Thyroid gland (tissue), 4 donors: ENCODE measurements at regions of chr6 and their contacts with region 1.

Region 1: GRCh38 chr6:13908955-13909381 is 15.8 kb upstream of the RNF182 start:
- DNase-seq: peak; percentile 31 to 53
- H3K4me3 ChIP-seq: no peak overlapping the region
- H3K27ac ChIP-seq: no peak overlapping the region
- H3K4me1 ChIP-seq: no peaks in the 10 kb centered on the region
- H3K27me3 ChIP-seq: no peaks in the 10 kb centered on the region
- CTCF ChIP-seq: peak; percentile 59 to 91 (median 84)
- POLR2A ChIP-seq: no peak

Region 2: DNA sequence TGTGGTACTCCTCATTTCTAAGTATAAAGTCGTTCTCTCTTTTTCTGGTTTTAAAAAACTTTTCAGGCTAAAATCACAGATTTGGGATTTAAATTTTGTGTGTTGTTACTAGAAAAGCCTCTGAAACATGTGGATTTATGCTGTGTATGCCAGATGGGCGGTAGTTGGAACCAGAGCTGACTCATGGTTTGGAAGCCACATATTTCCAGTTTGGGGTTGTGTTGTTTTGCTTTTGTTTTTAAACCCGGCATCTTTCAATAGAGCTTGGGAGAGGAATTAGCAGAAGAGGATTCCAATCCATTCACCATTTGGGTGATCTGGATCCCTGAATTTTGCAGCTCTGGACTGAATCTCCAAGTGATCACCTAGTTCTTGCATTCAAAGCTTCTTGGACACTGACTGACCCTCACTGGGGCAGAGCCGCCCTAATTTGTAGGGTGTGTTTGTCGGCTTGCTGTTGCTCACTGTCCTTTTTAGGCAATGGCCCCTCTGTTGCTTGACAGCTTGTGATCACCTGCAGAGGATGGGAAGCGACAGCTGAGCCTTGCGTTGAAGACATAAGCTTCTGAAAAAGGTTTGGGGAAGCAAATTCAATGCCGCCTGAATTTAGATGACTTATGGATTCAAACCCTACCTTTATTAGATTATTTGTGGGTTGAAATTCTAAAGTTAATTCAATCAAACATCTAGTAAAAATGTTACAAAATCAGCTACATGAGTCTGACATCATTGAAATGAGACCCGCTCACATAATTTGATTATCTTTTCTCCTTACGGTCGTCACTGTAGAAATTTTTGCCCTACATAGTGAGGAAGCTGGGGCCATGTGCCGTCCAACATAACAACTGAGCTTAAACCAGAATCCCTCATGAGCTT is 128.7 kb after region 1 on chr6:
- intact Hi-C with region 1: no loop called
- DNase-seq: no peak
- H3K4me3 ChIP-seq: no peak overlapping the region
- H3K27ac ChIP-seq: no peak overlapping the region
- H3K4me1 ChIP-seq: peaks cover 0 to 13% of the 10 kb centered on the region in 2 donors
- H3K27me3 ChIP-seq: no peaks in the 10 kb centered on the region
- CTCF ChIP-seq: no peak
- POLR2A ChIP-seq: no peak

Region 3: GRCh38 chr6:14066782-14067406 is 157.9 kb after region 1 on chr6:
- intact Hi-C with region 1: loop called (anchors 5 kb)
- DNase-seq: peak; percentile 23 to 45
- H3K4me3 ChIP-seq: no peak overlapping the region
- H3K27ac ChIP-seq: no peak overlapping the region
- H3K4me1 ChIP-seq: no peaks in the 10 kb centered on the region
- H3K27me3 ChIP-seq: no peaks in the 10 kb centered on the region
- CTCF ChIP-seq: peak in 5 of 6 experiments; percentile 13 to 87 (median 69)
- POLR2A ChIP-seq: no peak